ENCODE measurements at regions of chr5 and their contacts with region 1.

Region 1: GRCh38 chr5:168047043-168047668 is 244.3 kb upstream of the WWC1 start:
- DNase-seq: peak; percentile 38
- ATAC-seq: no peak
- H3K4me3 Mint-ChIP-seq: no peak overlapping the region
- H3K27ac Mint-ChIP-seq: no peak overlapping the region
- H3K4me1 Mint-ChIP-seq: no peaks in the 10 kb centered on the region
- H3K27me3 Mint-ChIP-seq: no peaks in the 10 kb centered on the region

Region 2: DNA sequence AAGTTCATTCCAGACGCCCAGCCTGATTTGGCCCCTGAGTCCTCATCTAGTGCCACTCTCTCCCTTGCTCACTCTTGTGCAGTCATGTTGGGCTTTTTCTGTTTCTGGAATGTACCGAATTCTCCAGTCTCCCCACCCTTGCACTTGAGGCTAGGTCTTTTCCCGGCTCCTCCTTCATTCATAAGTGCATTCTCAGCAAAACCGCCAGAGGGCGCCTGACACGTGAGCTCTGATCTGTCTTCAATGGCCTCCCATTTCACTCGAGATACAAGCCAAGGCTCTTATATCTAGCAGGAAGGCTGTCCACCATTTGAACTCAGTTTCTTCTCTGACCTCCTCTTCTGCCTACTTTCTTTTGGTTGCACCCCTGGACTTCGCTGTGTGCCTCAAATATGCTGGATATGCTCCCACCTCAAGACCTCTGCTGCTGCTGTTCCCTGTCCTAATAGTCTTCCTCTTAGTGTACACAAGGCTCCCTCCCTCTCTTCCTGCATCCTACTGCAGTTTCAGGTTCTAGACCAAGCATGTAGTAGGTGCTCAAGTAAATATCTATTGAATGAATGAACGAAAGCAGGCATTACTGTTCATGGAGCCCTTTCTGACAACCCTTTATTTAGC is 323.8 kb before region 1 on chr5:
- CTCF ChIA-PET with region 1: interaction called, 4 read pairs
- POLR2A ChIA-PET with region 1: no interaction called
- intact Hi-C with region 1: loop called (anchors 1 to 2 kb)
- DNase-seq: peak; percentile 81
- ATAC-seq: peak; percentile 87
- H3K4me3 Mint-ChIP-seq: no peak overlapping the region
- H3K27ac Mint-ChIP-seq: no peak overlapping the region
- H3K4me1 Mint-ChIP-seq: peaks cover 4% of the 10 kb centered on the region
- H3K27me3 Mint-ChIP-seq: peaks cover 5% of the 10 kb centered on the region

Region 3: DNA sequence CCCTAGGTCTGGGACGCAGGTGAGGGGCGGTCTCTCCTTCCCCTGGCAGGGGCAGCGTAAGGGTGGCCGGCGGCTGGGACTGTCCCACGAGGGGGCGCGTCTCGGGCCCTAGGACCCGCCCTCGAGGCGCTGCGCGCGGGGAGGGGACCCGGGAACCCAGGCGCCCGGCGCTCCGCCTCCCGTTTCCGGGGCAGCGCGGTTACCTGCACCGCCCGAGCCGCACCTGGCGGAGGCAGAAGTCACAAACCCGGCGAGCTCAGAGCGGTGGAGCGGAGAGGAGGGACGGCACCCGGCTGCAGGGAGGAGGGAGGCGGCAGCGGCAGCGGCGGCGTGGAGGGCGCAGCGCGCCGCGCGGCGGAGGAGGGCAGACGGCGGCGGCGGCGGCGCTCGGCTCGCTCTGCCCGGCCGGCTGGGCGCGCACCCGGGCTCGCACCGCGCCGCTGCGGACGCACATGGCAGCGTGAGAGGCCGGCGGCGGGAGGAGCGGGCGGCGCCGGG is 244.4 kb after region 1 on chr5 and contains the start of gene WWC1:
- CTCF ChIA-PET with region 1: no interaction called
- POLR2A ChIA-PET with region 1: no interaction called
- intact Hi-C with region 1: no loop called
- DNase-seq: peak; percentile 75
- ATAC-seq: peak; percentile 85
- H3K4me3 Mint-ChIP-seq: peak within 1 kb of the TSS; percentile 59
- H3K27ac Mint-ChIP-seq: no peak within 1 kb of the TSS
- H3K4me1 Mint-ChIP-seq: peaks cover 19% of the 10 kb centered on the region
- H3K27me3 Mint-ChIP-seq: peaks cover 37% of the 10 kb centered on the region
- total RNA-seq, gene WWC1: 2.1 to 2.2 TPM

Measured in activated CD4-positive, alpha-beta T cell treated with anti-CD3 and anti-CD28 coated beads for 36 hours (primary cell).